ENCODE measurements at regions of chr3 and their contacts with region 1.

Region 1: DNA sequence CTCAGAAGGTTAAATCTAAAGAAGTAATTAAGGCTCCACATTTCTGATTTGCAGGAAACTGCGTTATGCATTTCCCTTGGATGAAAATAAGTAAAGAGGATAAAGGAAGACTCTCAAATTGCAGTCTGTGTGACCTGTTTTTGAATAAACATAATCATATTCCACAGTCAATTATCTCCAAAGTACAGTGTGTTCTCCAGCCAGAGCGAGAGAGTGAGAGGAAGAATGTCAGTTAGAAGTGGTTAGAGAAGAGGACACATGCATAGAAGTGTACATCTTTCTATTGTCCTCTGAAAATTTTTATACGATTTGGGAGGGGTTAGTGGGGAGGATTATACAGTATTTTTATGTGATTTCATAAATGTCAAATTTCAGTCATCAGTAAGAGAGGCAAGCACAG is 487.1 kb downstream of the LPP start:
- DNase-seq: no peak
- ATAC-seq: peak in 3 of 8 donors; percentile 48 to 94 (median 52)
- H3K4me3 ChIP-seq: no peak overlapping the region
- H3K27ac ChIP-seq: peak overlapping the region in 4 of 10 donors; percentile 10 to 36 (median 30)
- H3K4me1 ChIP-seq: peaks cover 0 to 27% (median 16%) of the 10 kb centered on the region in 9 donors
- H3K27me3 ChIP-seq: no peaks in the 10 kb centered on the region
- CTCF ChIP-seq: no peak

Region 2: GRCh38 chr3:188677344-188677743 is 36.3 kb after region 1 on chr3:
- intact Hi-C with region 1: loop called in 1 of 10 experiments (anchors 5 kb)
- DNase-seq: no peak
- ATAC-seq: no peak
- H3K4me3 ChIP-seq: no peak overlapping the region
- H3K27ac ChIP-seq: no peak overlapping the region
- H3K4me1 ChIP-seq: peaks cover 0 to 51% (median 39%) of the 10 kb centered on the region in 9 donors
- H3K27me3 ChIP-seq: no peaks in the 10 kb centered on the region
- CTCF ChIP-seq: no peak